Endothelial cell of umbilical vein (primary cell): ENCODE measurements at regions of chr1 and their contacts with region 1.

Region 1: DNA sequence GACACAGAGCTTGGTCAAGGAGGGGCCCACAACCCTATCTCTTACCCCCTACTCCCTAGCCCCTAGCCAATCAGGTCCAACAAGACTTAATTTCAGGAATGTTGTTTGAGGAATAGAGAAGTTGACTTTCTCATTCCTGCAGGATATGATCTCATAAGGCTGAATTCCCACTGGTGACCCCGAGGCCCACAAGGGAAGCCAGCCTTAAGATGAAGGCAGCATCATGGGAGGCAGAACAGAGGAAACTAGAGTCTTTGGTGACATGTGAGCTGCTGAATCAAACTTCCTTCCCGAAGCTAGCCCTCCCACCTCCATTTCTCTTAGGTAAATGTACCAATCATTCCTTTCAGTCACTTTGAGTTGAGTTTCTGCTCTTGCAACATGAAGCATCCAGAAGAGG is 9.1 kb upstream of the PDIK1L start:
- DNase-seq: peak; percentile 68
- H3K4me3 ChIP-seq: no peak overlapping the region
- H3K27ac ChIP-seq: peak overlapping the region; percentile 62
- H3K4me1 ChIP-seq: peaks cover 30% of the 10 kb centered on the region
- H3K27me3 ChIP-seq: no peaks in the 10 kb centered on the region
- CTCF ChIP-seq: no peak
- POLR2A ChIP-seq: no peak

Region 2: GRCh38 chr1:26035959-26036755 is 66.4 kb before region 1 on chr1:
- CTCF ChIA-PET with region 1: interaction called, 19 read pairs
- POLR2A ChIA-PET with region 1: interaction called, 3 read pairs
- dilution Hi-C with region 1: no loop called
- intact Hi-C with region 1: loop called (anchors 1 kb)
- DNase-seq: peak; percentile 74
- H3K4me3 ChIP-seq: peak overlapping the region; percentile 65 to 85 (median 81)
- H3K27ac ChIP-seq: no peak overlapping the region
- H3K4me1 ChIP-seq: peaks cover 15% of the 10 kb centered on the region
- H3K27me3 ChIP-seq: peaks cover 0 to 3% of the 10 kb centered on the region in 2 experiments
- CTCF ChIP-seq: peak; percentile 98 to 99
- POLR2A ChIP-seq: no peak

Region 3: DNA sequence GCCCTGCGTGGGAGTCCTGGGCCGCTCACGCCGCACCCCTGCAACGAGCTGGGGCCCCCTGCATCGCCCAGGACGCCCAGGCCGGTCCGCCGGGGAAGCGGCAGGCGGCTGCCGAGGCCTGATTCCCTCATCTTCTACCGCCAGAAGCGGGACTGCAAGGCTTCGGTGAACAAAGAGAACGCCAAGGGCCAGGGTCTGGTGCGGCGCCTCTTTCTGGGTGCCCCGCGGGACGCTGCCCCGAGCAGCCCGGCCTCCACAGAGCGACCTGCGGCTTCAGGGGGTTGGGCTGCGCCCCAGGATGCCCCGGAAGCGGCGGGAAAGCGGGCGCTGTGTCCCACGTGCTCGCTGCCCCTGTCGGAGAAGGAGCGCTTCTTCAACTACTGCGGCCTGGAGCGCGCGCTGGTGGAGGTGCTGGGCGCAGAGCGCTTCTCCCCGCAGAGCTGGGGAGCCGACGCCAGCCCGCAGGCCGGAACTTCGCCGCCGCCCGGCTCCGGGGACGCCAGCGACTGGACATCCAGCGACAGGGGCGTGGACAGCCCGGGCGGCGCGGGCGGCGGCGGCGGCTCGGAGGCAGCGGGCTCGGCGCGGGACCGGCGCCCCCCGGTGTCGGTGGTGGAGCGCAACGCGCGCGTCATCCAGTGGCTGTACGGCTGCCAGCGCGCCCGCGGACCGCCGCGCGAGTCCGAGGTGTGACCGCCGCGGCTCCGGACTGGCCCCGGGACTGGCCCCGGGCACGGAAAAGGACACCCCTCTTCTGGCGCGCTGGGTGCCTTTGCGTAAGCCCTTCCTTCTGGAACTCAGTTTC is 59.1 kb after region 1 on chr1:
- CTCF ChIA-PET with region 1: interaction called, 18 read pairs
- POLR2A ChIA-PET with region 1: no interaction called
- dilution Hi-C with region 1: no loop called
- intact Hi-C with region 1: loop called (anchors 1 kb)
- DNase-seq: peak; percentile 46
- H3K4me3 ChIP-seq: peak overlapping the region in 2 of 3 experiments; percentile 20 to 29
- H3K27ac ChIP-seq: no peak overlapping the region
- H3K4me1 ChIP-seq: peaks cover 34% of the 10 kb centered on the region
- H3K27me3 ChIP-seq: no peaks in the 10 kb centered on the region
- CTCF ChIP-seq: peak in 1 of 2 donors; percentile 10
- POLR2A ChIP-seq: no peak

Region 4: GRCh38 chr1:26233903-26234643 is 131.5 kb after region 1 on chr1 and contains the start of gene CEP85:
- CTCF ChIA-PET with region 1: interaction called, 9 read pairs
- POLR2A ChIA-PET with region 1: no interaction called
- dilution Hi-C with region 1: no loop called
- intact Hi-C with region 1: loop called (anchors 1 kb)
- DNase-seq: peak; percentile 98
- H3K4me3 ChIP-seq: peak within 1 kb of the TSS; percentile 35 to 78 (median 65)
- H3K27ac ChIP-seq: peak within 1 kb of the TSS; percentile 9
- H3K4me1 ChIP-seq: peaks cover 12% of the 10 kb centered on the region
- H3K27me3 ChIP-seq: no peaks in the 10 kb centered on the region
- CTCF ChIP-seq: peak; percentile 87 to 92
- POLR2A ChIP-seq: peak; percentile 81
- total RNA-seq, gene CEP85: 16.2 and 17.8 TPM in 2 replicates

Region 5: GRCh38 chr1:26363549-26364448 is 261.3 kb after region 1 on chr1:
- CTCF ChIA-PET with region 1: interaction called, 9 read pairs
- POLR2A ChIA-PET with region 1: no interaction called
- dilution Hi-C with region 1: no loop called
- intact Hi-C with region 1: loop called (anchors 1 kb)
- DNase-seq: peak; percentile 67
- H3K4me3 ChIP-seq: no peak overlapping the region
- H3K27ac ChIP-seq: no peak overlapping the region
- H3K4me1 ChIP-seq: no peaks in the 10 kb centered on the region
- H3K27me3 ChIP-seq: peaks cover 18 to 23% of the 10 kb centered on the region in 2 experiments
- CTCF ChIP-seq: peak; percentile 96 to 99
- POLR2A ChIP-seq: no peak

Region 6: GRCh38 chr1:26391450-26391849 is 288.9 kb after region 1 on chr1:
- CTCF ChIA-PET with region 1: interaction called, 4 read pairs
- POLR2A ChIA-PET with region 1: no interaction called
- dilution Hi-C with region 1: no loop called
- intact Hi-C with region 1: loop called (anchors 10 kb)
- DNase-seq: peak; percentile 29
- H3K4me3 ChIP-seq: no peak overlapping the region
- H3K27ac ChIP-seq: no peak overlapping the region
- H3K4me1 ChIP-seq: no peaks in the 10 kb centered on the region
- H3K27me3 ChIP-seq: peaks cover 0 to 3% of the 10 kb centered on the region in 2 experiments
- CTCF ChIP-seq: peak; percentile 50 to 70
- POLR2A ChIP-seq: no peak